ENCODE measurements at regions of chr2 and their contacts with region 1.

Region 1: DNA sequence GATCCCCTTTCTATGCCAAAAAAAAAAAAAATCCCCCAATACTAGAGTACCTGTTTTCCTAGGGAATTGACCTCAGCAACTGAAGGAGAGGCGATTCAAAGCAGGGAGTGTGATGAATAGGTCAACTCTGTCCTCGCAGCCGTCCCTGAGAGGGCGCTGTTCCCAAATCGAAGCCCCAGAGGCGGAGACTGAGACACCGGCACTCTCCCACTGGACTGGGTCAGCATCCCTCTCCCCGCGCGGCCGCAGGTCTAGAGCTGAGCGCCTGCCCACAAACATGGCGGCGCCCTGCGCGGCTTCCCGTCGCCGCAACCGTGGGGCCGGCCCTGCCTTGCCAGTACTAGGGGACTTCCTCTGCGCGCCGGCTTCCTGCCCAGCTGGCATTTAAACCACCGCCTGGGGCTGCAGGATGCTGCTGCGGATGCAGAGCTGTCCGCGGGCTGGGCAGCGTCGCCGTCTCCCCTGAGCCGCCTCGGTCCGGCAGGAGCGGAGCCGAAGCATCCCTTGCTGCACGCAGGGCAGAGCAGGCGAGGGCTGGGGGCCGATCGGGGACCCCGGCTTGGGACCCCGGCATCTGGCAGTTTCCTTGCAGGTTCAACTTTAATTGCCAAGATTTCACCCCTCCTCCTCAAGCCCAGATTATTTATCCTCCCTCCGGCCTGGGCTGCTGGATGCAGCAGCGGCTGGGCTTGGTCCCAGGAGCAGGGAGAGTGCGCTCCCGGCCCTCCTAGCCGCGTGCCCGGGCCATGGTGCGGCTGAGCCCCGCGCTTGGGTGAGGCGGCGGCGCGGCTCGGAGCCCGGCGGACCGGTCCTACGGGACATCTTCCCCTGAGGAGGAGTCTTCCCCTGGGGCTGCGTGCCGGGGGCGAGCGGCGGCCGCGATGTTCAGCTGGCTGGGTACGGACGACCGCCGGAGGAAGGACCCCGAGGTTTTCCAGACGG is at the start of gene EHD3:
- DNase-seq: peak; percentile 89 to 90
- ATAC-seq: peak; percentile 94 to 96 (median 95)
- H3K4me3 ChIP-seq: peak within 1 kb of the TSS; percentile 48 to 91 (median 70)
- H3K27ac ChIP-seq: peak within 1 kb of the TSS in 9 of 10 donors; percentile 48 to 96 (median 74)
- H3K4me1 ChIP-seq: peaks cover 6 to 68% (median 47%) of the 10 kb centered on the region in 9 donors
- H3K27me3 ChIP-seq: no peaks in the 10 kb centered on the region
- CTCF ChIP-seq: peak; percentile 42 to 83 (median 63)
- total RNA-seq, gene EHD3: 12.5 to 40.9 (median 26.5) TPM

Region 2: DNA sequence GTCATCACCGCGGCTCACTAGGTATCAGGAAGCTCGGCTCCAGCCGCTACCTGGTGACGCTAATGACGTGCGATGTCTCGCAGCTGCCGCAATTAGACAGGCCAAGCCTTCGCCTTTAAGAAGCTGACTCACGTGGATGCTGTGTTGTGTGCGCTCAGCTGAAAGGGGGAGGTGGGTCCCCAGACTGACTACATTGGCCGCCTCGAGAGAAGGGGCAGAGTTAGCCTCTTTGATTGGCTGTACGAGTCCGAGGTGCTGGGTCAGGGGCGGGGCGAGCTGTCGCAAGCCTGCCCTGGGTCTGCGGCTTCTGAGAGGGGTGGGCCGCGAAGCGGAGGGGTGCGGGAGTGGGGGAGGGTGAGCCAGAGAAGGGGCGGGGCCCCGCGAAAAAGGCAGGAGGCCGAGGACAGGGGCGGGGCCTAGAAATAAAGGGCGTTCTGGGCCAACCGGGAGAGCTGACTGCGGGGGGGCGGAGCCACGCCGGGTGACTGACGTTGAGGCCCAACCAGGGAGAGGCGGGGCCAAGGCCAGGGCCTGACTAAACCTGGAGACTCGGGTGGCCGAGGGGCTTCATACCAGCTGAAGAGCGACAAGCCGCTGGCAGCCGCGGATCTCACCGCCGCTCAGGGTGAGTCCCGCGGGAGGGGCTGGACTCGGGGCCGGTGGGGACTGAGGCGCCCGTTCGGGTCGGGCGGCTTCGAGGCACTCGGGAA is 1087.4 kb before region 1 on chr2 and contains the start of gene YPEL5:
- intact Hi-C with region 1: loop called in 1 of 10 experiments (anchors 10 kb)
- DNase-seq: peak; percentile 99
- ATAC-seq: peak; percentile 95 to 99 (median 98)
- H3K4me3 ChIP-seq: peak within 1 kb of the TSS; percentile 73 to 99 (median 98)
- H3K27ac ChIP-seq: peak within 1 kb of the TSS; percentile 93 to 100 (median 99)
- H3K4me1 ChIP-seq: peaks cover 11 to 47% (median 36%) of the 10 kb centered on the region in 9 donors
- H3K27me3 ChIP-seq: no peaks in the 10 kb centered on the region
- CTCF ChIP-seq: no peak
- total RNA-seq, gene YPEL5: 52.0 to 88.8 (median 73.8) TPM

Region 3: DNA sequence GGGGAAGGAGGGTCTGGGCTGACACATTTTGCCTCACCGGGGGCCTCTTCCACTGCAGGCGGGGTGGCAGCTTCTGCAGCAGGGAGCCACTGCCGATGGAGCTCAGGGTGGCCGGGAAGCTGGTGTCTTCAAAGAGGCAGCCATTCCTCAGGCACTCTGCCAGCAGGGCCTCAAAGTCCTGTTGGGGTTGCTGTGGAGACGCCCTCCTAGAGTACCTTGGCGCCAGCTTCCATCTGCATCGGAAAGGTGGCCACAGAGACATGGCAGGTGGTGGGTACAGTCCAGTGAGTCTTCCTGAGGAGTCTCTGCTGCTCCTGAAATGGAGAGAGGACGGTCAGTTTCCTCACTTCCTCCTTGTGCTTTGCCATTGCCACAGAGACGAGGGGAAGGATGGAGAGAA is 28.8 kb before region 1 on chr2:
- intact Hi-C with region 1: no loop called
- DNase-seq: no peak
- ATAC-seq: no peak
- H3K4me3 ChIP-seq: no peak overlapping the region
- H3K27ac ChIP-seq: no peak overlapping the region
- H3K4me1 ChIP-seq: peaks cover 0 to 23% (median 2%) of the 10 kb centered on the region in 9 donors
- H3K27me3 ChIP-seq: no peaks in the 10 kb centered on the region
- CTCF ChIP-seq: no peak

Region 4: DNA sequence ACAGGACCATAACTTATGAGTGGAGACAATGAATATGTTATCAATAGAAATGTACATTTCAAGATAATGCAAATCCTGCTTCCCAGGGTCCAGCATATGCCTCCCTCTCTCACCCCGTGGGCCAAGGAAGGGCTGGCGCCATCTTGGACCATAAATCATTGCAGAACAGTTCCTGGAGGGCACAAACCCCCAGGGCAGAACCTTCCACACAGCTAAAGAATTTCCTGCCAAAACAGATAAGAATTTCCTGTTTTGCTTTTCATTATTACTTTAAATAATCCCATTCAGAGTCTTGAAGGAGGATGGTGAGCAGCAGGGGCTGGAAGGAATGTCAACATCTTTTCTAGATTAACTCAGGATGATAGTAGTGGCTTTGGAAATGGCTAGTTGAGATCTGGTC is 53.6 kb after region 1 on chr2:
- intact Hi-C with region 1: loop called in 1 of 10 experiments (anchors 5 kb)
- DNase-seq: no peak
- ATAC-seq: no peak
- H3K4me3 ChIP-seq: no peak overlapping the region
- H3K27ac ChIP-seq: no peak overlapping the region
- H3K4me1 ChIP-seq: peaks cover 0 to 15% (median 4%) of the 10 kb centered on the region in 9 donors
- H3K27me3 ChIP-seq: no peaks in the 10 kb centered on the region
- CTCF ChIP-seq: no peak

Region 5: DNA sequence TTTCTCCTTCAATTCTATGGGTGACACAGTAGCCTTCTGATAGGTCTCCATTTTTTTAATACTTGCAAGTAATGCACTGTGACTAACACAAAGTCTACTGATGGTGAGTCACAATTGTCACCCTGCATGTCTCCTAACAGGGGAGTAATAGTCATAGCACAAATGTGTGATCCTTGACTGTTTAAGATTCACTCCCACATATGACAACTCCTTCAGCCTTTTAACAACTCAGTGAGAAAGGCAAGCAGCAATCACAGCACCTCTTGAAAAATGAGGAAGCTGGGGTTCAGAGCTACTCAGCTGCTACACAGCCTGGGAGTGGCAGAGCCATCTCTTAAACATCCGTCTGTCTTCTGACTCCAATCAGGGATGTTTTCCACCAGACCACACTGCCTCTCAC is 63.7 kb after region 1 on chr2:
- intact Hi-C with region 1: loop called in 1 of 10 experiments (anchors 2 kb)
- DNase-seq: no peak
- ATAC-seq: peak in 3 of 8 donors; percentile 23 to 27 (median 23)
- H3K4me3 ChIP-seq: no peak overlapping the region
- H3K27ac ChIP-seq: peak overlapping the region in 3 of 10 donors; percentile 1 to 76 (median 61)
- H3K4me1 ChIP-seq: peaks cover 6 to 58% (median 30%) of the 10 kb centered on the region in 9 donors
- H3K27me3 ChIP-seq: no peaks in the 10 kb centered on the region
- CTCF ChIP-seq: no peak

Region 6: GRCh38 chr2:31328026-31328425 is 94.0 kb after region 1 on chr2:
- intact Hi-C with region 1: loop called in 7 of 10 experiments (anchors 2 to 5 kb)
- DNase-seq: no peak
- ATAC-seq: peak in 1 of 8 donors; percentile 25
- H3K4me3 ChIP-seq: no peak overlapping the region
- H3K27ac ChIP-seq: no peak overlapping the region
- H3K4me1 ChIP-seq: peaks cover 0 to 29% (median 6%) of the 10 kb centered on the region in 9 donors
- H3K27me3 ChIP-seq: no peaks in the 10 kb centered on the region
- CTCF ChIP-seq: no peak